MCF 10A (cell line): ENCODE measurements at regions of chr12 and their contacts with region 1.

Region 1: DNA sequence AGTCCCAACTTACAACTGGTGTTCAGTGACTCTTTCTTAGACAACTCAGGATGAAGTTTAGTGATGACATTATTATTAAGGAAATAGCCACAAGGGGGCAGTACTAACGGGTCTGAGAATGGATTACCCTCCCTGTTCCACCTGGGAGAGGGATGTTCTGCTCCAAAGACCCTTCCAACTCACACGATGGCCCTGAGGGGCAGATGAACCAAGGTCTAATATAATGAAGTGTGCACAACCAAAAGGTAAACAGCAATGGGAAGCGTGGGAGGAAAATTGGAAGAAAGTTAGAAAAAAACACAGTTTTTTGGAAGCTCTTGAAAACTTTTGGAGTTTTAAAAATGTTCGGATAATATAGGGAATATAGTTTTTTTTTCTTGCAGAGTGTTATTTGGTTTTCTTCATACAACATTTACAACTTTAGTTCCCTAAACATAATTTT is 24.0 kb downstream of the FGF6 start:
- DNase-seq: peak; percentile 64
- H3K4me3 Mint-ChIP-seq: no peak overlapping the region
- H3K27ac Mint-ChIP-seq: no peak overlapping the region
- H3K4me1 Mint-ChIP-seq: peaks cover 5% of the 10 kb centered on the region
- H3K27me3 Mint-ChIP-seq: peaks cover 20% of the 10 kb centered on the region
- CTCF ChIP-seq: peak; percentile 49

Region 2: DNA sequence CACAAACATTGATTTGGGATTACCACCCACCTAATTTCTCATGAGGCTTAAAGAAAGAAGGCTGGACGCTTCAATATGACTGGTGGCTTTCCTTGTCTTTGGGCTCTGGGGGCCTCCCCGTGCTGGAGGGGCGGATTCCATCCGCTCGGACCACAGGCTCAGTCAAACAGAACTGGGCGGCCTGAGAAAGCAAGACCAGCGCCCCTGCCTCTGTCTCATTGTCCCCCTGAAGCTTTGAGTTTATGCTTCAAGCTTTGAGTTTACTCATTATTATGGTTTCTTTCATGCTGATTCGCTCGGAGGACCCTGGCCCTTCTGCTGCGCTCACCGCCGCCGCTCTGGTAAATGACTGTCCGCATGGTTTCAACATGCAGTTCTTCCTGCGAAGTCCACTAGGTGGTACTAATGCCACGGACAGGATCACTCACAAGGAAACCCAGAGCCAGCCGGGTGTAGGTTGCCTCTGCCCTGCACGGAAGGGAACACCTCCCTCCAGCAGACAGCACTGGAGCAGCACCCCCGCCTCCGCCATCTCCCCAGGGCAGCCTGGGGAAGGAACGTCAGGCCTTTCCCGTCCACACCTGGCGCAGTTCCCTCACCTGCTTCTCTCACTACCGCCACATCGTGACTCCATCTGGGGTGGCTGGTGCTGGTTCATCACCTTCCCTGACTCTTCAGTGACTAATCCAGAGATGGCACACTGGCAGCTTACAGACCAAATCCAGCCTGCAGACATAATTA is 113.8 kb before region 1 on chr12:
- CTCF ChIA-PET with region 1: interaction called, 9 read pairs
- POLR2A ChIA-PET with region 1: no interaction called
- intact Hi-C with region 1: loop called (anchors 5 kb)
- DNase-seq: peak; percentile 88
- H3K4me3 Mint-ChIP-seq: peak overlapping the region; percentile 60
- H3K27ac Mint-ChIP-seq: peak overlapping the region; percentile 36
- H3K4me1 Mint-ChIP-seq: peaks cover 10% of the 10 kb centered on the region
- H3K27me3 Mint-ChIP-seq: peaks cover 12% of the 10 kb centered on the region
- CTCF ChIP-seq: peak; percentile 78

Region 3: DNA sequence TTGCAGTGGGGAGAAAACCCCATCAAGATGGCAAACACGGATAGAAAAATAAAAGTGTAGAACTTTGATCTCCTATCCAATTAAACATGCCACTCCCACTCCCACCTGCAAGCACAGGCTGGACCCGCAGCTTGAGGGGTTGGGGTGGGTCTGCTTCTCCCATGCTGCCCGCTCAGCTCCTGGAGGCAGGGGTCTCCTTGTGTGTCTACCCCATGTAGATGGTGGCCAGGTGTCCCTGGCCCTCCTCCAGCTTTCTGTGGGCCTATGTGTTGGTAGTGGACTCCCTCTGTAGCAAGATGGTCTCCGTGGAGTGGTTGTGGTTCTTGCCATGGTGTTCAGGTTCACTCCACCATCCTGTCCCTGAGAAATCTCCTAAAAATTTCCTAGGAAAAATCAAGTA is 18.6 kb before region 1 on chr12:
- CTCF ChIA-PET with region 1: interaction called, 10 read pairs
- POLR2A ChIA-PET with region 1: no interaction called
- intact Hi-C with region 1: no loop called
- DNase-seq: no peak
- H3K4me3 Mint-ChIP-seq: no peak overlapping the region
- H3K27ac Mint-ChIP-seq: no peak overlapping the region
- H3K4me1 Mint-ChIP-seq: no peaks in the 10 kb centered on the region
- H3K27me3 Mint-ChIP-seq: peaks cover 16% of the 10 kb centered on the region
- CTCF ChIP-seq: no peak

Region 4: GRCh38 chr12:4434706-4435425 is 13.3 kb after region 1 on chr12:
- CTCF ChIA-PET with region 1: interaction called, 21 read pairs
- POLR2A ChIA-PET with region 1: no interaction called
- intact Hi-C with region 1: no loop called
- DNase-seq: no peak
- H3K4me3 Mint-ChIP-seq: no peak overlapping the region
- H3K27ac Mint-ChIP-seq: no peak overlapping the region
- H3K4me1 Mint-ChIP-seq: no peaks in the 10 kb centered on the region
- H3K27me3 Mint-ChIP-seq: peaks cover 20% of the 10 kb centered on the region
- CTCF ChIP-seq: no peak

Region 5: GRCh38 chr12:4483885-4484823 is 62.5 kb after region 1 on chr12:
- CTCF ChIA-PET with region 1: interaction called, 12 read pairs
- POLR2A ChIA-PET with region 1: interaction called, 4 read pairs
- intact Hi-C with region 1: no loop called
- DNase-seq: peak; percentile 59
- H3K4me3 Mint-ChIP-seq: no peak overlapping the region
- H3K27ac Mint-ChIP-seq: peak overlapping the region; percentile 14
- H3K4me1 Mint-ChIP-seq: peaks cover 22% of the 10 kb centered on the region
- H3K27me3 Mint-ChIP-seq: no peaks in the 10 kb centered on the region
- CTCF ChIP-seq: no peak

Region 6: GRCh38 chr12:4496145-4496838 is 74.7 kb after region 1 on chr12:
- CTCF ChIA-PET with region 1: interaction called, 20 read pairs
- POLR2A ChIA-PET with region 1: no interaction called
- intact Hi-C with region 1: no loop called
- DNase-seq: no peak
- H3K4me3 Mint-ChIP-seq: no peak overlapping the region
- H3K27ac Mint-ChIP-seq: no peak overlapping the region
- H3K4me1 Mint-ChIP-seq: peaks cover 6% of the 10 kb centered on the region
- H3K27me3 Mint-ChIP-seq: no peaks in the 10 kb centered on the region
- CTCF ChIP-seq: no peak

Region 7: GRCh38 chr12:4526923-4527546 is 105.4 kb after region 1 on chr12:
- CTCF ChIA-PET with region 1: interaction called, 73 read pairs
- POLR2A ChIA-PET with region 1: no interaction called
- intact Hi-C with region 1: loop called (anchors 1 kb)
- DNase-seq: peak; percentile 16
- H3K4me3 Mint-ChIP-seq: no peak overlapping the region
- H3K27ac Mint-ChIP-seq: no peak overlapping the region
- H3K4me1 Mint-ChIP-seq: no peaks in the 10 kb centered on the region
- H3K27me3 Mint-ChIP-seq: no peaks in the 10 kb centered on the region
- CTCF ChIP-seq: peak; percentile 31

Region 8: GRCh38 chr12:5200278-5201087 is 778.9 kb after region 1 on chr12:
- CTCF ChIA-PET with region 1: no interaction called
- POLR2A ChIA-PET with region 1: no interaction called
- intact Hi-C with region 1: no loop called
- DNase-seq: no peak
- H3K4me3 Mint-ChIP-seq: no peak overlapping the region
- H3K27ac Mint-ChIP-seq: no peak overlapping the region
- H3K4me1 Mint-ChIP-seq: no peaks in the 10 kb centered on the region
- H3K27me3 Mint-ChIP-seq: no peaks in the 10 kb centered on the region
- CTCF ChIP-seq: no peak